GM12878 (cell line): ENCODE measurements at regions of chr18 and their contacts with region 1.

Region 1: DNA sequence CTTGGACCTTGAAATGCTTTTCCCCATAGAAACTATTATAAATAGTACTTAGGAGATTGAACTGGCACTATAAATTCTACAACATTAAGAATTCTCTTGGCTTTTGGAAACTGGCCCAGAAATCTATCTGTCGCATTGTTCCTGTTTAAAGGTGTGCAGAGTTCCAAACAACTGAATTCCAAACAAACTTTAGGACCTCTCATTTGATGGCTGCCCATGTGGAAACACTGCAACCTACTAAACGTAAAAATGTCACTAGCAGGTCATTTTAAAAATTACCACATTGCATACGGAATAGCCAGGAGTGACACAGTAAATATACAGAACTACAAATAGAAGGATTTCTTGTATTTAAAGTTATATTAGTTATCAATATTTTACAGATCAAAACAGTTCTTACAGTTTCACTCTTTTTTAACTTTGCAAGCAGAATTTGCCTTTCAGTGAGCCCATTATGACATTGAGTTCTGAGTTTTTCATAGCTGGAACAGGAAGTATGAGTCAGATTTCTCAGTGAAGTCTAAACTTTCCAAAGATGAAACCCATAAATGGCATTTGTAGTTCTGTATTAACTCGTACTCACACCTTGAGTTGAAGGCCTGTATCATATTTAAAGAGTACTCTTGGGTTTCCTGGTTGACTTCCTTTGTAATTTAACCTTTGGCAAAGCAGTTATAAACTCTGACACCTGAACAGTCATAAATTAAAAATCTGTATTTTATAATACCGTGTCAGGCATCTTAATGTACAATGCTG is 142.3 kb upstream of the BOD1L2 start:
- DNase-seq: peak; percentile 63
- ATAC-seq: peak; percentile 97
- H3K4me3 ChIP-seq: no peak overlapping the region
- H3K27ac ChIP-seq: peak overlapping the region; percentile 71
- H3K4me1 ChIP-seq: peaks cover 16% of the 10 kb centered on the region
- H3K27me3 ChIP-seq: no peaks in the 10 kb centered on the region
- CTCF ChIP-seq: no peak
- EP300 ChIP-seq: peak in 1 of 2 experiments; percentile 26; a peak in 1 of 4 replicates
- POLR2A ChIP-seq: no peak
- RAD21 ChIP-seq: no peak

Region 2: GRCh38 chr18:56902653-56903052 is 101.9 kb before region 1 on chr18:
- CTCF ChIA-PET with region 1: no interaction called
- POLR2A ChIA-PET with region 1: interaction called, 4 read pairs
- RAD21 ChIA-PET with region 1: no interaction called
- SMC1A ChIA-PET with region 1: interaction called, 10 read pairs
- in situ Hi-C with region 1: no loop called
- intact Hi-C with region 1: no loop called
- DNase-seq: no peak
- ATAC-seq: peak; percentile 82
- H3K4me3 ChIP-seq: no peak overlapping the region
- H3K27ac ChIP-seq: no peak overlapping the region
- H3K4me1 ChIP-seq: no peaks in the 10 kb centered on the region
- H3K27me3 ChIP-seq: no peaks in the 10 kb centered on the region
- CTCF ChIP-seq: no peak
- EP300 ChIP-seq: no peak
- POLR2A ChIP-seq: no peak
- RAD21 ChIP-seq: no peak

Region 3: DNA sequence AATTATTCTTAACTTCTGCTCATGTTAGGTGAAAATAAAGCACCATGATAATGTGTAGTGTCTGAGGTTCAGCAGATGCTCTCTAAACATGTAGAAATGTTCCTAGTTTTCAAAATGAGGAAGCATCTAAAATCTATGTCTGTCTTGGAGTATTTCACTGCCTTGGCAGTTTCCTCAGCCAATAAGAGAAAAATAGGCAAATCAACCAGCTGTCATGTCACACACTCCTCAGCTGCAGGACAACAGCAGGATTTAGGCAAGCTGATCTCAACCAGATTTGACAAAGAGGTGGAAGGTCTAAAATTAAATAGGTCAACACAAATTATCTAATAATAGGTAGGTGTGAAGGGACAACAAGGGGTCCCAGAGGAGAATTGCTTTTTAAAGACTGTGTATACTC is 21.8 kb before region 1 on chr18:
- CTCF ChIA-PET with region 1: interaction called, 8 read pairs
- POLR2A ChIA-PET with region 1: interaction called, 3 read pairs
- RAD21 ChIA-PET with region 1: interaction called, 5 read pairs
- SMC1A ChIA-PET with region 1: interaction called, 19 read pairs
- in situ Hi-C with region 1: no loop called
- intact Hi-C with region 1: no loop called
- DNase-seq: no peak
- ATAC-seq: no peak; the same call in 2 of the 3 replicates
- H3K4me3 ChIP-seq: no peak overlapping the region
- H3K27ac ChIP-seq: no peak overlapping the region
- H3K4me1 ChIP-seq: no peaks in the 10 kb centered on the region
- H3K27me3 ChIP-seq: no peaks in the 10 kb centered on the region
- CTCF ChIP-seq: no peak
- EP300 ChIP-seq: no peak
- POLR2A ChIP-seq: no peak
- RAD21 ChIP-seq: no peak

Region 4: GRCh38 chr18:57015451-57015850 is 10.9 kb after region 1 on chr18:
- CTCF ChIA-PET with region 1: interaction called, 9 read pairs
- POLR2A ChIA-PET with region 1: interaction called, 5 read pairs
- RAD21 ChIA-PET with region 1: interaction called, 32 read pairs
- SMC1A ChIA-PET with region 1: interaction called, 94 read pairs
- in situ Hi-C with region 1: no loop called
- intact Hi-C with region 1: no loop called
- DNase-seq: no peak
- ATAC-seq: no peak
- H3K4me3 ChIP-seq: no peak overlapping the region
- H3K27ac ChIP-seq: no peak overlapping the region
- H3K4me1 ChIP-seq: peaks cover 12% of the 10 kb centered on the region
- H3K27me3 ChIP-seq: no peaks in the 10 kb centered on the region
- CTCF ChIP-seq: no peak
- EP300 ChIP-seq: no peak
- POLR2A ChIP-seq: no peak
- RAD21 ChIP-seq: no peak

Region 5: DNA sequence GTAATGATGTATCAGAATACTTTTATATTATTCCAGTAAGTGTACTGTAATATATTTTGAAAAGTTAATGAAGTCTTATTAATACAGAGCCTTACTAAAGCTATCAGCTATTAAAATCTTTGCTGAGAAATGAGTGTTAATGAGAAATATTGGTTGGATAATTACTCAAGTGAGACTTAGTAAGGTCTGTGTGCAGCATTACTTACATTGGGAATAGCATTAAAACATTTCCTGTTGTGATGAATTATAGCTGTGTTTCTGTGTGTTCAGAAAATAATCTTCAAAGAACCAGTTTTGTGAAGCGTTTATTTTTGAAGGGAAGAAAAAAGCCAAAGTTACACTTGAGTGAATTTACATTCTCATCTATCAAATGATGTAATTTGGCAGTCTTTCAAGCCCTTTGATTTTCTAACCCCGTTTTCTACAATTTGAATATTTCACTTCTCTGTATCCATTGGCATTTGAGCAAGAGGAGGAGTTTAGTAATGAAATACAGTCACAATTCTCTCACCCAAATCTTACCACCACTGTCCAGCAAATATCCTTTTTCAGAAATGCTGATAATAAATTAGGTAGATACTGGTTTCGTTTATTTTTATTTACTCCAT is 18.8 kb after region 1 on chr18:
- CTCF ChIA-PET with region 1: interaction called, 8 read pairs
- POLR2A ChIA-PET with region 1: interaction called, 5 read pairs
- RAD21 ChIA-PET with region 1: interaction called, 32 read pairs
- SMC1A ChIA-PET with region 1: interaction called, 94 read pairs
- in situ Hi-C with region 1: no loop called
- intact Hi-C with region 1: no loop called
- DNase-seq: peak; percentile 55
- ATAC-seq: peak; percentile 92
- H3K4me3 ChIP-seq: 0 out of 2 replicates have a peak overlapping the region, but pooled peaks have one; percentile 5
- H3K27ac ChIP-seq: no peak overlapping the region
- H3K4me1 ChIP-seq: no peaks in the 10 kb centered on the region; the same call in 1 of the 2 replicates
- H3K27me3 ChIP-seq: no peaks in the 10 kb centered on the region
- CTCF ChIP-seq: no peak
- EP300 ChIP-seq: peak in 1 of 2 experiments; percentile 46; a peak in 1 of 4 replicates
- POLR2A ChIP-seq: no peak
- RAD21 ChIP-seq: no peak